PC-9 (cell line): ENCODE measurements at regions of chr12 and their contacts with region 1.

Region 1: GRCh38 chr12:25352083-25352918 is 101.6 kb upstream of the KRAS start:
- DNase-seq: no peak
- H3K4me3 ChIP-seq: no peak overlapping the region
- H3K27ac ChIP-seq: no peak overlapping the region
- H3K4me1 ChIP-seq: peaks cover 21% of the 10 kb centered on the region
- H3K27me3 ChIP-seq: no peaks in the 10 kb centered on the region
- CTCF ChIP-seq: no peak

Region 2: DNA sequence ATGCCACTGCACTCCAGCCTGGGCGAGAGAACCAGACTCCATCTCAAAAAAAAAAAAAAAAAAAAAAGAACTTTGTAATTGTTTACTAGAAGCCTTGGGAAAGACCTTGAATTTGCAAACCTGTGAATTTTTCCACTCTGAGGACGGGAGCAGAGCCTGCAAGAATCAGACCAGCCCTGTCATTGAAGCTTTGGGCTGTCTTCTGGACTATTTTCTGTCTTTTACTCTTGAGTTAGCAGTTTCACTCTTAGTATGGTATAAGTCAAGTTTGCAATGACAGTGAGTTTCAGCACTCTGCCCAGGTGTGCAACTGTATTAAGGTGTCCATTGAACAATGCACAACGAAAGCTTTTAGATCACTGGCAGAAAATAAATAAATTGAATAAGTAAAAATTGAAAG is 20.2 kb before region 1 on chr12:
- CTCF ChIA-PET with region 1: interaction called, 5 read pairs
- POLR2A ChIA-PET with region 1: interaction called, 10 read pairs
- intact Hi-C with region 1: no loop called
- DNase-seq: no peak
- H3K4me3 ChIP-seq: no peak overlapping the region
- H3K27ac ChIP-seq: no peak overlapping the region
- H3K4me1 ChIP-seq: peaks cover 11% of the 10 kb centered on the region
- H3K27me3 ChIP-seq: no peaks in the 10 kb centered on the region
- CTCF ChIP-seq: no peak

Region 3: GRCh38 chr12:25436203-25437030 is 84.1 kb after region 1 on chr12:
- CTCF ChIA-PET with region 1: no interaction called
- POLR2A ChIA-PET with region 1: no interaction called
- intact Hi-C with region 1: no loop called
- DNase-seq: peak; percentile 44 to 58
- H3K4me3 ChIP-seq: peak overlapping the region; percentile 45; the same call in 1 of the 2 replicates
- H3K27ac ChIP-seq: no peak overlapping the region
- H3K4me1 ChIP-seq: no peaks in the 10 kb centered on the region
- H3K27me3 ChIP-seq: no peaks in the 10 kb centered on the region
- CTCF ChIP-seq: peak; percentile 93

Region 4: GRCh38 chr12:26555139-26555538 is 1202.8 kb after region 1 on chr12:
- CTCF ChIA-PET with region 1: interaction called, 12 read pairs
- POLR2A ChIA-PET with region 1: no interaction called
- intact Hi-C with region 1: no loop called
- DNase-seq: no peak
- H3K4me3 ChIP-seq: no peak overlapping the region
- H3K27ac ChIP-seq: no peak overlapping the region
- H3K4me1 ChIP-seq: no peaks in the 10 kb centered on the region
- H3K27me3 ChIP-seq: no peaks in the 10 kb centered on the region
- CTCF ChIP-seq: no peak

Region 5: DNA sequence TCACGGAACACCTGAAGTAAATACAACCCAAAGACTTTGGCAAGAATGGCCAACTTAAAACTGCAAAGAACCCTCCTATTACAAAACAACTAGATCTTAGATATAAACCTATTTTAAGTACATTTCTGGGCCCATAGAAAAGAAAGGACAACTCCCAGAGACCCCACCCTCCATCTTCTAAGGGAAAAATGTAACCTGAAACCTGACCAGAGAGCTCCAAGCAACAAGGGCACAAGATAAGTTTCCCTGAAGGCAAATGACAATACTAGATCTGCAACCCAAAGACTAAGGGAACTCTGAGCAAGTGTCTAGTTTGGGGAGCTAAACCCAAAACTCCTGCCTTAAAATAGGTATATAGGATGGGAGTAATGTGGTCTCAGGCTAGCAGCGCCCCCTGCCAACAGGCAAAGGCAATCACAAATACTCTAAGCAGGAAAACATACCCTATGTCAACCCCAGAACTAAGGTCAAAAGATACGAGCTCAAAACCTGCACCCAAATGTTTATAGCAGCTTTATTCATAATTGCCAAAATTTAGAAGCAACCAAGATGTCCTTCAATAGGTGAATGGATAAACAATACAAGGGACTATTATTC is 1261.8 kb after region 1 on chr12:
- CTCF ChIA-PET with region 1: no interaction called
- POLR2A ChIA-PET with region 1: interaction called, 10 read pairs
- intact Hi-C with region 1: no loop called
- DNase-seq: peak in 1 of 2 experiments; percentile 31
- H3K4me3 ChIP-seq: no peak overlapping the region
- H3K27ac ChIP-seq: no peak overlapping the region
- H3K4me1 ChIP-seq: 0 out of 2 replicates have a peak, but pooled peaks cover 4% of the 10 kb centered on the region
- H3K27me3 ChIP-seq: no peaks in the 10 kb centered on the region
- CTCF ChIP-seq: peak; percentile 64

Region 6: GRCh38 chr12:26817183-26817591 is 1464.9 kb after region 1 on chr12:
- CTCF ChIA-PET with region 1: no interaction called
- POLR2A ChIA-PET with region 1: interaction called, 18 read pairs
- intact Hi-C with region 1: no loop called
- DNase-seq: no peak
- H3K4me3 ChIP-seq: no peak overlapping the region
- H3K27ac ChIP-seq: no peak overlapping the region
- H3K4me1 ChIP-seq: peaks cover 4% of the 10 kb centered on the region; the same call in 1 of the 2 replicates
- H3K27me3 ChIP-seq: no peaks in the 10 kb centered on the region
- CTCF ChIP-seq: no peak

Region 7: DNA sequence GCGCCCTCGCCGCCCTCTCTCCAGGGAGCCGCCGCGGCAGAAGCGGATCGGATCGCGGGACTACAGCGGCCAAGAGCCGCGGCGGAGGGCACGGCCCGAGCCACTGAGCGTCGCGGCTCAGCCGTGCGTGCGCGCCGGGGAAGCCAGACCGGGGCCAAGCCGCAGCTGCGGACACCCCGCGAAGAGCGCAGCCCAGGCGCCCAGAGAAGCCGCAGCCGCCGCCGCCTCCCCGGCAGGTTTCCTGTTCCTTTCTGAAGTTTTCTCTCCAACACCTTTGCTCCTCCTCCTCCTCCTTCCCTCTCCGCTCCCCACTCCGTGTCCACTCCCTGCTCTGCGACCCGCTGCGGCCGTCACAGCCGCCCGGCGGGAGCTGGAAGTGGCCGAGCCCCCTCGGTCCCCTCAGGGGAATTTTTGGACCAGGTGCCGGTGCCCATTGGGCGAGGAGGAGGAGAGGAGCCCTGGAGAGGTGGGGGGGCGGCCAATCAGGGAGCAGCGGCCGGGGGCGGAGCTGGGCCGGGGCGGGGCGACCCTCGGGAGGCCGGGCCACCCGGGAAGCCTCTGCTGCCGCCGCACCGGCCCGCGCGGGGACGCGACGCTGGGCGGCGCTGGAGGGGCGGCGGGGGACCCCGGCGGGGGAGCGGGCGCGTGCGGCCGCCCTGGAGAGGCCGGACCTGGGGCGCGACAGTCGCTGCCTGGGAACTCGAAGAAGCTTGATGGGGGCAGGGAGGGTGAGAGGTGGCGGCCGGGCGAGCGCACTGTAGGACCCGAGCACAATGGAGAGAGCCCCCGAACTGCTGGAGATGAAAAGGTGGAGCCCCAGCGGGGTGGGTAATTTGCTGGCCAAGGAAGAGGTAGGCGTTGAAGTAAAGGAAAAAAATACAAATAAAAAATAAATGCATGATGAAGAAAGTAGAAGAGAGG is 1480.8 kb after region 1 on chr12 and contains the start of gene ITPR2:
- CTCF ChIA-PET with region 1: no interaction called
- POLR2A ChIA-PET with region 1: interaction called, 10 read pairs
- intact Hi-C with region 1: no loop called
- DNase-seq: peak; percentile 80 to 99
- H3K4me3 ChIP-seq: peak within 1 kb of the TSS; percentile 83
- H3K27ac ChIP-seq: peak within 1 kb of the TSS; percentile 61
- H3K4me1 ChIP-seq: peaks cover 14% of the 10 kb centered on the region
- H3K27me3 ChIP-seq: no peaks in the 10 kb centered on the region
- CTCF ChIP-seq: peak; percentile 51; the same call in 1 of the 2 replicates
- total RNA-seq, gene ITPR2: 16.2 and 26.0 TPM in 2 replicates